ENCODE measurements at regions of chr1 and their contacts with region 1.

Region 1: GRCh38 chr1:110455151-110455550 is 4.2 kb downstream of the PROK1 start:
- DNase-seq: no peak
- ATAC-seq: 0 out of 3 replicates have a peak, but pooled peaks have one; percentile 27
- H3K4me3 ChIP-seq: no peak overlapping the region
- H3K27ac ChIP-seq: no peak overlapping the region
- H3K4me1 ChIP-seq: no peaks in the 10 kb centered on the region
- H3K27me3 ChIP-seq: peaks cover 3 to 7% of the 10 kb centered on the region in 2 experiments; a peak in 3 of 4 replicates
- CTCF ChIP-seq: peak in 1 of 3 experiments; percentile 14; a peak in 2 of 6 replicates
- EP300 ChIP-seq: no peak
- POLR2A ChIP-seq: no peak
- RAD21 ChIP-seq: 0 out of 2 replicates have a peak, but pooled peaks have one; percentile 31

Region 2: DNA sequence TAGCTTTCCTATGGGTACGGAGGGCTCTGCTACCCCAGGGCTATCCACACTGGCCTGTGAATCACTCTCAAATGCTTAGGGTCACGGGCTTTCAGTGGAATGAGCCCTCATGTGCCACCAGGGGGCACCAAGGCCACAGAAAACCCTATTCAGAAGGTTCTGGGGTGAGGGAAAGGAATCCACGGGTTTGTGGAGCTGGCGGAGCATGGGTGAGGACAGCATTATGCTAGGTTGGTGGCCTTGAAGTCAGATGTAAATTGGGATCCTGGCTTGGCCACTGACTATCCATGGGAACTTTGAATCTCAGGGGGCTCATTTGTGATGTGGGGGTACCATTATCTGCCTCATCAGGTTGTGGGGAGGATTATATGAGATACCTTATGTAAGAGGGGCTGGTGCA is 42.6 kb before region 1 on chr1:
- CTCF ChIA-PET with region 1: interaction called, 146 read pairs
- POLR2A ChIA-PET with region 1: no interaction called
- RAD21 ChIA-PET with region 1: interaction called, 28 read pairs
- SMC1A ChIA-PET with region 1: interaction called, 61 read pairs
- in situ Hi-C with region 1: no loop called
- intact Hi-C with region 1: loop called (anchors 1 kb)
- DNase-seq: peak; percentile 24
- ATAC-seq: peak; percentile 88
- H3K4me3 ChIP-seq: no peak overlapping the region
- H3K27ac ChIP-seq: no peak overlapping the region
- H3K4me1 ChIP-seq: peaks cover 6% of the 10 kb centered on the region
- H3K27me3 ChIP-seq: peaks cover 0 to 2% of the 10 kb centered on the region in 2 experiments; a peak in 2 of 4 replicates
- CTCF ChIP-seq: peak; percentile 80 to 83 (median 83)
- EP300 ChIP-seq: no peak
- POLR2A ChIP-seq: no peak
- RAD21 ChIP-seq: peak; percentile 86